MCF 10A (cell line): ENCODE measurements at regions of chr19 and their contacts with region 1.

Region 1: DNA sequence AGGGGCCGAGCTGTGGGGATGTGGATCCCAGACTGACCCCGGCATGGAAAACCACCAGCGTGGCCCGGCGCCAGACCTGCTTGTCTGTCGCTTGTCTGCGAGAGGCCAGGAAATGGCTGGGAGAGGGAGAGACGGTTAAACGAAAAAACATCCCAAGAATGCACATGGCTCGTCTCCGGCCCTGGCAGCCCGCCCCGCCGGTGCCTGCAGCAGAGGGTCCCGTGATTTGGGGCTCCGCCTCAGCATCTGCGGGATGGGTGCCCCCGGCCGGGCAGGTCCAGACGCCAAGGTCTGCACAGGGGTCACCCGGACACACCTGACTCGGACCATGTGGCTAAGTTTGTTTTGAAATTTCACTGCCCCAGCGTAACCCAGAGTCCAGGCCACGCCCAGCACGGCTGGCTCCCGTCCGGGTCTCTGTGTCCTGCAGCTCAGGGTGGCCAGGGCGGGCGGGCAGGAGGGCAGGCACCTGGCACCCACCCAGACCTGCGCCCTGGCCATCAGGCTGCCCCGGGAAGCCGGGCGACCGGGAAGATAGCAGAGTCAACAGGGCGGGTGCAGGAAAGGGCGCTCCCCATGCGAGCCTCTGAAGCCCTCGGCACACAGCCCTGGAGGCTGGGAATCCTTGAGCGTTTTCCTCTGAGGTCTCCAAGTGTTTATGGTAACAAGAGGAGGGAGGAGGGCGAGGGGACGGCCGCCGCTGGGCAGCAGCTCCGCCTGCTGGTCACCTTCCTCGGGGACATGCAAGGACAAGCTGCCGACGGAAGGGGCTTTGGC is 103.2 kb downstream of the GADD45B start:
- DNase-seq: peak; percentile 96
- H3K4me3 Mint-ChIP-seq: peak overlapping the region; percentile 67
- H3K27ac Mint-ChIP-seq: peak overlapping the region; percentile 40
- H3K4me1 Mint-ChIP-seq: peaks cover 5% of the 10 kb centered on the region
- H3K27me3 Mint-ChIP-seq: no peaks in the 10 kb centered on the region
- CTCF ChIP-seq: peak; percentile 86

Region 2: DNA sequence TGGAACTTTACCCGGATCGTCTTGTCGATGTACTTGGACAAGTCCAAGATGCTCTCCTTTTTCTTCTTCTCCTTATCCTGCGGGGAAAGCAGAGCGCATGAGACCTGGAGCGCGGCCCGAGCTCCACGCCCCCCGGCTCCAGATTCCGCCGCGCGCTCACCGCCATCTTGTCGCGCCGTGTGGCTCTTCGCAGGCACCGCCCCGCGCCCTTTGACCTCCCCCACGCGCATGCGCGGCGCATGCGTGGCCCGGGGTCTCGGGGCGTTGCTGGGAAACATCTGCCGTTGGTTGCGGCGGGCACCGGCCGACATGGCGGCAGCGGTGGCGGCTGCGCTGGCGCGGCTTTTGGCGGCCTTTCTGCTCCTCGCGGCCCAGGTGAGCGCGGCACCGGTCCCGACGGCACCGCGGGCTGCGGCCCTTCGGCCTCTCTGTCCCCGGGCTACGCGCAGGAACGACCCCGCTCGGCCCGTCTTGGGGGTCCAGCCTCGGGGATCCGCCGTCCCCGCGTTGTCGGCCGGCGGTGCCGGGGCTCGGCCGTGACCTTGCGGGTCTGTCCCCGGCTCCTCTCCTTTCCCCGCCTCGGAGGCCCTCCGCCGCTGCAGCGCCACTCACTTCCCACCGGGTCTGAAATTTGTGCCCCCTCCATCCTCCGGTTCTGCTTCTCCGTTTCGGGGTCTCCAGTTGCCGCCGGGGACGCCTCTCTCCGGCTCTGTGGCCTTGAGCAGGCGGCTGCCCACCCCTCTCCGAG is 250.5 kb before region 1 on chr19 and contains the starts of genes LSM7 and SPPL2B:
- CTCF ChIA-PET with region 1: no interaction called
- POLR2A ChIA-PET with region 1: no interaction called
- intact Hi-C with region 1: no loop called
- DNase-seq: peak; percentile 91
- H3K4me3 Mint-ChIP-seq: peak within 1 kb of the TSS; percentile 93
- H3K27ac Mint-ChIP-seq: peak within 1 kb of the TSS; percentile 97
- H3K4me1 Mint-ChIP-seq: peaks cover 27% of the 10 kb centered on the region
- H3K27me3 Mint-ChIP-seq: no peaks in the 10 kb centered on the region
- CTCF ChIP-seq: no peak
- total RNA-seq, gene LSM7: 135 and 152 TPM in 2 replicates
- total RNA-seq, gene SPPL2B: 70.1 and 70.9 TPM in 2 replicates

Region 3: GRCh38 chr19:2524838-2525723 is 54.0 kb before region 1 on chr19:
- CTCF ChIA-PET with region 1: interaction called, 4 read pairs
- POLR2A ChIA-PET with region 1: interaction called, 4 read pairs
- intact Hi-C with region 1: loop called (anchors 5 kb)
- DNase-seq: peak; percentile 82
- H3K4me3 Mint-ChIP-seq: peak overlapping the region; percentile 25
- H3K27ac Mint-ChIP-seq: no peak overlapping the region
- H3K4me1 Mint-ChIP-seq: peaks cover 17% of the 10 kb centered on the region
- H3K27me3 Mint-ChIP-seq: no peaks in the 10 kb centered on the region
- CTCF ChIP-seq: no peak